Activated naive CD4-positive, alpha-beta T cell treated with anti-CD3 and anti-CD28 coated beads for 36 hours (primary cell): ENCODE measurements at regions of chr5 and their contacts with region 1.

Region 1: GRCh38 chr5:165630261-165630778 is 2124.9 kb downstream of the MAT2B start:
- DNase-seq: peak; percentile 15
- H3K4me3 Mint-ChIP-seq: no peak overlapping the region
- H3K27ac Mint-ChIP-seq: no peak overlapping the region
- H3K4me1 Mint-ChIP-seq: no peaks in the 10 kb centered on the region
- H3K27me3 Mint-ChIP-seq: no peaks in the 10 kb centered on the region

Region 2: DNA sequence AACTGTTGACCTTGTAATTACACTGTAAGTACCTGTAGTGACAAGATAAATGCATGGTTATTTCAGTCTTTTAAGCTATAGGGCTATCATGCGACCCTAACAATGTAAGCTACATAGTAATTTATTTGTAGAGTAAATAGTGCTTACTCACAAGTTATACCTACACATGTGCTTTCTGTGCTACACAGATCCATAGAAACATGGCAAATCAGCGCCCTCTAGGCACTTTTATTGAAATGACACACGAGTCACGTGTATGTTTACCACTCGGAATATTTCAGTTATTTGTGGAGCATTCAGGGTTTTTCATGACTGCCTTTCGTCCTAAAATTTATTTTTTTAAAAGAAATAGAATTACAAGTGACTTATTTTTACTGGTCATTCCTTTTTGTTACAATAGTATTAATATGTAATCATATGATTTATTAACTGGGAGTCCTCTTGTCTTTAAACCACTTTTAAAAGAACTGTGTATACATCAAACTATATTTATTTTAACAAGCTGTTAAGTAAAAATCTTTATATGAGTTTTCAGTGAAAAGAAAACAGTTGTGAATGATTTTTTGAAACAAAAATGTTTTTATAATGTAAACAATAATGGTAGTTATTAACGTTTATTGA is 1418.8 kb after region 1 on chr5:
- CTCF ChIA-PET with region 1: no interaction called
- intact Hi-C with region 1: loop called (anchors 1 kb)
- DNase-seq: peak; percentile 42
- H3K4me3 Mint-ChIP-seq: no peak overlapping the region
- H3K27ac Mint-ChIP-seq: no peak overlapping the region
- H3K4me1 Mint-ChIP-seq: no peaks in the 10 kb centered on the region
- H3K27me3 Mint-ChIP-seq: no peaks in the 10 kb centered on the region